ENCODE measurements at regions of chr10 and their contacts with region 1.

Region 1: DNA sequence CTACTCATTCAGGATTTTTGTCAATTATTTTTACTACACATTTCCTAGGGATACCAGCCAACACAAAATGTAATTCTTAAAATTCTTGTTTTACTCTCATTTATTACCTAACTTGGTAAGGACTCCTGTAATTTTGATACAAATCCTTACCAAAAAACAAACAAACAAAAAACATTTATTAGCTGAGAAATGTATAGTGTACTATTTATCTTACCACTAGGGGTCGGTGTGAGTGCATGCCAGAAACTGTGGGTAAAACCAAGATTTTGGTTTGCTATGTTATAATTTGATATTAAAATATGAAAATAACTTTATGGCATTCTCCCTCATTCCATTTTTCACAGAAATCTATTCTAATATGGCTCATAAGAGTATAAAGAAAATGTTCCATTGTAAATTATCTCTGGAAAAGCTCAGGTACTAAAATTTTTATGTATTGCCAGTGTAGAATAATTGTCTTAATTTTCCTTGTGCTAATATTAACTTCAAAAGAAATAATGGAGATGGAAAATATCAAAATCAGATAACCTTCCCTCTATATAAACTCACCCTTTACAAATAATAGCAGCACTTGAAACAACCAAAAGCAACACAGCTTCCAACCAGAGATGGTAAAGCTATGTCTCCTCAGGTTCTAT is 290.8 kb upstream of the PCDH15 start:
- DNase-seq: no peak
- ATAC-seq: peak; percentile 45; the same call in 1 of the 3 replicates
- H3K4me3 ChIP-seq: no peak overlapping the region
- H3K27ac ChIP-seq: no peak overlapping the region
- H3K4me1 ChIP-seq: no peaks in the 10 kb centered on the region
- H3K27me3 ChIP-seq: no peaks in the 10 kb centered on the region
- CTCF ChIP-seq: peak; percentile 58 to 63 (median 62)
- EP300 ChIP-seq: no peak
- POLR2A ChIP-seq: no peak
- RAD21 ChIP-seq: peak; percentile 82

Region 2: GRCh38 chr10:55263327-55263726 is 171.5 kb after region 1 on chr10:
- CTCF ChIA-PET with region 1: interaction called, 5 read pairs
- POLR2A ChIA-PET with region 1: no interaction called
- RAD21 ChIA-PET with region 1: interaction called, 5 read pairs
- SMC1A ChIA-PET with region 1: interaction called, 4 read pairs
- in situ Hi-C with region 1: loop called (anchors 10 kb)
- intact Hi-C with region 1: loop called (anchors 1 kb)
- DNase-seq: no peak
- ATAC-seq: peak; percentile 17; the same call in 1 of the 3 replicates
- H3K4me3 ChIP-seq: no peak overlapping the region
- H3K27ac ChIP-seq: no peak overlapping the region
- H3K4me1 ChIP-seq: no peaks in the 10 kb centered on the region
- H3K27me3 ChIP-seq: 0 out of 4 replicates have a peak, but pooled peaks cover 0 to 2% of the 10 kb centered on the region in 2 experiments
- CTCF ChIP-seq: no peak
- EP300 ChIP-seq: no peak
- POLR2A ChIP-seq: no peak
- RAD21 ChIP-seq: no peak

Region 3: GRCh38 chr10:55495555-55495954 is 403.7 kb after region 1 on chr10:
- CTCF ChIA-PET with region 1: interaction called, 6 read pairs
- POLR2A ChIA-PET with region 1: no interaction called
- RAD21 ChIA-PET with region 1: interaction called, 3 read pairs
- SMC1A ChIA-PET with region 1: interaction called, 4 read pairs
- in situ Hi-C with region 1: loop called (anchors 10 kb)
- intact Hi-C with region 1: no loop called
- DNase-seq: no peak
- ATAC-seq: peak; percentile 31; the same call in 1 of the 3 replicates
- H3K4me3 ChIP-seq: no peak overlapping the region
- H3K27ac ChIP-seq: no peak overlapping the region
- H3K4me1 ChIP-seq: no peaks in the 10 kb centered on the region
- H3K27me3 ChIP-seq: no peaks in the 10 kb centered on the region
- CTCF ChIP-seq: no peak
- EP300 ChIP-seq: no peak
- POLR2A ChIP-seq: no peak
- RAD21 ChIP-seq: no peak

Region 4: GRCh38 chr10:55500932-55501559 is 409.2 kb after region 1 on chr10:
- CTCF ChIA-PET with region 1: interaction called, 6 read pairs
- POLR2A ChIA-PET with region 1: no interaction called
- RAD21 ChIA-PET with region 1: no interaction called
- SMC1A ChIA-PET with region 1: interaction called, 4 read pairs
- in situ Hi-C with region 1: loop called (anchors 10 kb)
- intact Hi-C with region 1: loop called (anchors 1 kb)
- DNase-seq: no peak
- ATAC-seq: peak; percentile 91
- H3K4me3 ChIP-seq: no peak overlapping the region
- H3K27ac ChIP-seq: no peak overlapping the region
- H3K4me1 ChIP-seq: no peaks in the 10 kb centered on the region
- H3K27me3 ChIP-seq: no peaks in the 10 kb centered on the region
- CTCF ChIP-seq: peak; percentile 60 to 69 (median 63)
- EP300 ChIP-seq: no peak
- POLR2A ChIP-seq: no peak
- RAD21 ChIP-seq: peak; percentile 79

Region 5: GRCh38 chr10:55631071-55631654 is 539.4 kb after region 1 on chr10:
- CTCF ChIA-PET with region 1: interaction called, 3 read pairs
- POLR2A ChIA-PET with region 1: no interaction called
- RAD21 ChIA-PET with region 1: no interaction called
- SMC1A ChIA-PET with region 1: no interaction called
- in situ Hi-C with region 1: no loop called
- intact Hi-C with region 1: loop called (anchors 10 kb)
- DNase-seq: no peak
- ATAC-seq: peak; percentile 89
- H3K4me3 ChIP-seq: no peak overlapping the region
- H3K27ac ChIP-seq: no peak overlapping the region
- H3K4me1 ChIP-seq: no peaks in the 10 kb centered on the region
- H3K27me3 ChIP-seq: peaks cover 0 to 5% of the 10 kb centered on the region in 2 experiments; a peak in 3 of 4 replicates
- CTCF ChIP-seq: peak; percentile 14 to 35 (median 20); a peak in 4 of 6 replicates
- EP300 ChIP-seq: no peak
- POLR2A ChIP-seq: no peak
- RAD21 ChIP-seq: peak; percentile 21; the same call in 1 of the 2 replicates

Region 6: GRCh38 chr10:55747244-55747643 is 655.4 kb after region 1 on chr10:
- CTCF ChIA-PET with region 1: no interaction called
- POLR2A ChIA-PET with region 1: no interaction called
- RAD21 ChIA-PET with region 1: no interaction called
- SMC1A ChIA-PET with region 1: no interaction called
- in situ Hi-C with region 1: loop called (anchors 10 kb)
- intact Hi-C with region 1: loop called (anchors 10 kb)
- DNase-seq: no peak
- ATAC-seq: no peak
- H3K4me3 ChIP-seq: no peak overlapping the region
- H3K27ac ChIP-seq: no peak overlapping the region
- H3K4me1 ChIP-seq: no peaks in the 10 kb centered on the region
- H3K27me3 ChIP-seq: no peaks in the 10 kb centered on the region
- CTCF ChIP-seq: no peak
- EP300 ChIP-seq: no peak
- POLR2A ChIP-seq: no peak
- RAD21 ChIP-seq: no peak